A673 (cell line): ENCODE measurements at regions of chr3 and their contacts with region 1.

Region 1: GRCh38 chr3:183844606-183845005 is 19.2 kb upstream of the MAP6D1 start:
- DNase-seq: no peak
- H3K4me3 ChIP-seq: no peak overlapping the region
- H3K27ac ChIP-seq: no peak overlapping the region
- H3K4me1 ChIP-seq: no peaks in the 10 kb centered on the region
- H3K27me3 ChIP-seq: no peaks in the 10 kb centered on the region
- CTCF ChIP-seq: no peak

Region 2: GRCh38 chr3:184050217-184050847 is 205.7 kb after region 1 on chr3:
- CTCF ChIA-PET with region 1: no interaction called
- POLR2A ChIA-PET with region 1: no interaction called
- intact Hi-C with region 1: no loop called
- DNase-seq: no peak
- H3K4me3 ChIP-seq: no peak overlapping the region
- H3K27ac ChIP-seq: no peak overlapping the region
- H3K4me1 ChIP-seq: no peaks in the 10 kb centered on the region
- H3K27me3 ChIP-seq: peaks cover 22% of the 10 kb centered on the region
- CTCF ChIP-seq: no peak

Region 3: GRCh38 chr3:185406121-185406620 is 1561.6 kb after region 1 on chr3:
- CTCF ChIA-PET with region 1: no interaction called
- POLR2A ChIA-PET with region 1: interaction called, 15 read pairs
- intact Hi-C with region 1: no loop called
- DNase-seq: peak; percentile 10
- H3K4me3 ChIP-seq: no peak overlapping the region
- H3K27ac ChIP-seq: no peak overlapping the region
- H3K4me1 ChIP-seq: peaks cover 19% of the 10 kb centered on the region
- H3K27me3 ChIP-seq: no peaks in the 10 kb centered on the region
- CTCF ChIP-seq: no peak